Heart right ventricle (tissue), 16 donors: ENCODE measurements at regions of chr2 and their contacts with region 1.

Region 1: GRCh38 chr2:138893716-138894115 is 113.5 kb upstream of the NXPH2 start:
- DNase-seq: no peak
- ATAC-seq: no peak
- H3K4me3 ChIP-seq: no peak overlapping the region
- H3K27ac ChIP-seq: no peak overlapping the region
- H3K4me1 ChIP-seq: no peaks in the 10 kb centered on the region
- H3K27me3 ChIP-seq: no peaks in the 10 kb centered on the region
- CTCF ChIP-seq: no peak

Region 2: GRCh38 chr2:138922973-138923563 is 29.4 kb after region 1 on chr2:
- intact Hi-C with region 1: loop called in 1 of 10 experiments (anchors 1 kb)
- DNase-seq: no peak
- ATAC-seq: no peak
- H3K4me3 ChIP-seq: no peak overlapping the region
- H3K27ac ChIP-seq: no peak overlapping the region
- H3K4me1 ChIP-seq: no peaks in the 10 kb centered on the region
- H3K27me3 ChIP-seq: no peaks in the 10 kb centered on the region
- CTCF ChIP-seq: peak in 6 of 9 donors; percentile 20 to 43 (median 30)